ENCODE measurements at regions of chr6 and their contacts with region 1.

Region 1: GRCh38 chr6:72622094-72622940 is 453 bp downstream of the KCNQ5 start:
- DNase-seq: peak; percentile 54
- H3K4me3 Mint-ChIP-seq: peak overlapping the region; percentile 93
- H3K27ac Mint-ChIP-seq: peak overlapping the region; percentile 86
- H3K4me1 Mint-ChIP-seq: peaks cover 10% of the 10 kb centered on the region
- H3K27me3 Mint-ChIP-seq: no peaks in the 10 kb centered on the region
- CTCF ChIP-seq: peak; percentile 18

Region 2: DNA sequence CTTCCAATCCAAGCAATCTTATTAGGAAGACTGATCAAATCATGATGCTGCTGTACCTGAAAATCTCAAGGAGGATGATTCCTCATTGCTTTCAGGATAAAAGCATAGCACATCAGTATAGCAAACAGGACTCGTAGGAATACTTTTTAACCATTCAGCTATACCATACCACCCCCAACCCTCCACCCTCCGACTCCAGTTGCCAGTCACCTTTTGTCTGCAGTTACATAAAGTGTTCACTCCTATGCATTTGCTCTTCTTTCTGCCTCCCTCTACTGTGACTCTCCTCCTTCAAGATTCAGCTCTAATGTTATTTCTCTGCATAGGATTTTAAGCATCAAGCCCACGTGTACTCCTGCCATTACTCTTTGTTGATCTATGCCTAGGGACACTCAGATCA is 125.1 kb before region 1 on chr6:
- CTCF ChIA-PET with region 1: no interaction called
- POLR2A ChIA-PET with region 1: no interaction called
- intact Hi-C with region 1: no loop called
- DNase-seq: no peak
- H3K4me3 Mint-ChIP-seq: no peak overlapping the region
- H3K27ac Mint-ChIP-seq: no peak overlapping the region
- H3K4me1 Mint-ChIP-seq: no peaks in the 10 kb centered on the region
- H3K27me3 Mint-ChIP-seq: peaks cover 32% of the 10 kb centered on the region
- CTCF ChIP-seq: no peak

Region 3: DNA sequence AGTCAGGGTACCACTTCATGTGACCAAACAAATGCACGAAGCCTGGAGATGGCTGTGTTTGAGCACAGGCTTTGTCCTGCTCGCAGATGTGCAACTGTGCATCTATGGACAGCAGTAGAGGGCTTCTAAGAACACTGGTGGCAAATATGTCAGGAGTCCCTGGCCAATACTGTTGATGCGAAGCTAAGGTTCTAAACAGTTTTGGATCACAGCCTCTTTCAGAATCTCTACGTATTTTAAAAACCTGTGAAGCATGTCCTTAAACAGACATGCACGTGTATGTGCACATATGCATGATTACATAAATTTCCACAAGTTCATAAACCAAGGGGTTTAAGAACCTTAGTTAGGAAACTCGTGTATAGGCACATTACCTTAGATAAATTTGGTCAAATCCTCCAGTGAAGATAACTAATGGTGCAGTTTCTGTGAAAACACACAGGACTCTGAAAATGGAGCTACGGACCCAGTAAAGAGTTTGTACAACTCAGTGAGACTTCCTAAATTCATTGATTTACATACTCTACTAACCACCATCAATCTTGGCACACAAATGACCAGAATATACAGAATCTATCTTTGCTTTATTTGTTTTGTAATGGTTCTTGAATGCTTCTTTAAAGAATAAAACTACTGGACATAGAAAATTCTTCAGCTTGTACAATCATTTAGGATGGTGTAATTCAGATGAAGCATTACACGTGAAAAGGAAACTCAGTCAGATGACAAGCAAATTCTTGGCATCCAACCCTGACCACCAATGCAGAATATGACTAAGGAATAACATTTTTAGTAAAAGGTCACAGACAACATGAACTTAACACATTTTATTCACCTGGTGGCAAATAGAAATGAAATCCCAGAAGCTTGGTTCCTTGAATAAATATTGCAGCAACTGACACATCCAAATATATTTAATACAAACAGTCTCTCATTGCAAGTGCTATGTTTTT is 27.0 kb after region 1 on chr6:
- CTCF ChIA-PET with region 1: interaction called, 8 read pairs
- POLR2A ChIA-PET with region 1: interaction called, 4 read pairs
- intact Hi-C with region 1: loop called (anchors 2 kb)
- DNase-seq: peak; percentile 90
- H3K4me3 Mint-ChIP-seq: no peak overlapping the region
- H3K27ac Mint-ChIP-seq: peak overlapping the region; percentile 1
- H3K4me1 Mint-ChIP-seq: peaks cover 46% of the 10 kb centered on the region
- H3K27me3 Mint-ChIP-seq: no peaks in the 10 kb centered on the region
- CTCF ChIP-seq: no peak

Region 4: DNA sequence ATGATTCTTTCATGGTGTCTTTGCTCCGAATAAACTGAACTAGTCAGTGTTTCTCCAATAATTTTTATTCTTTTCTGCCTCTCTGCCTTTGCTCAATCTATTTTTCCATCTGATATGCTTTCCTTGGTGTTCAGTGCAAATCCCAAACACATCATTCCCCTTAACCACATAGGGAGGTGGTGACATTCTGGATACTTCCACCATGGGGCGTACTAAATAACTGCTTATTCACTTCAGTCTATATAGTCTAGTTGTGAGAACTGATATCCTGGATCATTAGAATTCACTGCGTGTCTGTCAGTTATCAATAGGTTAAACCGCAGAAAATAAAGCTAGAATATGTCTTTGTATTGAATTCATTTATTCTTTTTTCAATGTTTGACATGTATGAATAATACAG is 82.7 kb after region 1 on chr6:
- CTCF ChIA-PET with region 1: no interaction called
- POLR2A ChIA-PET with region 1: no interaction called
- intact Hi-C with region 1: no loop called
- DNase-seq: peak; percentile 23
- H3K4me3 Mint-ChIP-seq: no peak overlapping the region
- H3K27ac Mint-ChIP-seq: no peak overlapping the region
- H3K4me1 Mint-ChIP-seq: no peaks in the 10 kb centered on the region
- H3K27me3 Mint-ChIP-seq: no peaks in the 10 kb centered on the region
- CTCF ChIP-seq: no peak

Region 5: DNA sequence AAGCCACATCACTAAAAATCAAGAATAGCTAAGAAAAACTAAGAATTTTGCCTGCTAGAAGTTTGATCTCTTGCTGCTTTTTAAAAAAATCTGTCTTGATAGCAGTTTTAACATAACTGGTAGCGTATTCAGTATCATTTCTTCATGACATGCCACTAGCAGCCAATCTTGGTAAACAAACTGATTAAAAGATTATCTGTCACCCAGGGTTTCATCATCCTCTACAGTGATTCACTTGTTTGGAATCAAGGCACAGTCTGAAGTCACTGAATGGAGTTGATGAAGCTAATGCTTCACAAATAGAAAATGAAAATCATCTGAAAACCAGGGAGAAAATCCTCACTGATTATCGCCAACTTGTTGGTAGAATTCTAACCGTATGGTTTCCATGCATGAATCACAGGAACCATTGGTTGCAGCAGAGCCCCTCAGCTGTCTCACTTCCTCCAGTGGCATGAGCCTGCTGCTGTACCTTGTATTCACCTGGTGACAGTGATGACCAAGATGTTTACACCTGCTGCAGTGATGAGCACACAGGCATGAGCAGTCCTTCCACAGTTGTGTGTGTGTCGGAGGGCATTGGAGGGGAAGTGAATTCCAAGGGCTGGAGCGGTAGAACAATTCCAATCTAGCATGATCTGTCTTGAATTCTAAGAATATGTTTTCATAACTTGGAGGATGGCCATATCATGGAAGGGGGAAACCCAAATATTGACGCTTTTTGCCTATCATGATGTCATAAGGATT is 328.0 kb after region 1 on chr6:
- CTCF ChIA-PET with region 1: interaction called, 3 read pairs
- POLR2A ChIA-PET with region 1: no interaction called
- intact Hi-C with region 1: loop called (anchors 10 kb)
- DNase-seq: peak; percentile 62
- H3K4me3 Mint-ChIP-seq: no peak overlapping the region
- H3K27ac Mint-ChIP-seq: peak overlapping the region; percentile 65
- H3K4me1 Mint-ChIP-seq: peaks cover 36% of the 10 kb centered on the region
- H3K27me3 Mint-ChIP-seq: no peaks in the 10 kb centered on the region
- CTCF ChIP-seq: no peak

Region 6: GRCh38 chr6:73180763-73181619 is 558.7 kb after region 1 on chr6:
- CTCF ChIA-PET with region 1: interaction called, 68 read pairs
- POLR2A ChIA-PET with region 1: no interaction called
- intact Hi-C with region 1: no loop called
- DNase-seq: peak; percentile 70
- H3K4me3 Mint-ChIP-seq: peak overlapping the region; percentile 51
- H3K27ac Mint-ChIP-seq: no peak overlapping the region
- H3K4me1 Mint-ChIP-seq: no peaks in the 10 kb centered on the region
- H3K27me3 Mint-ChIP-seq: no peaks in the 10 kb centered on the region
- CTCF ChIP-seq: peak; percentile 81